ENCODE measurements at regions of chr1 and their contacts with region 1.

Region 1: GRCh38 chr1:207404849-207405525 is 49.1 kb upstream of the CR2 start:
- DNase-seq: no peak

Region 2: DNA sequence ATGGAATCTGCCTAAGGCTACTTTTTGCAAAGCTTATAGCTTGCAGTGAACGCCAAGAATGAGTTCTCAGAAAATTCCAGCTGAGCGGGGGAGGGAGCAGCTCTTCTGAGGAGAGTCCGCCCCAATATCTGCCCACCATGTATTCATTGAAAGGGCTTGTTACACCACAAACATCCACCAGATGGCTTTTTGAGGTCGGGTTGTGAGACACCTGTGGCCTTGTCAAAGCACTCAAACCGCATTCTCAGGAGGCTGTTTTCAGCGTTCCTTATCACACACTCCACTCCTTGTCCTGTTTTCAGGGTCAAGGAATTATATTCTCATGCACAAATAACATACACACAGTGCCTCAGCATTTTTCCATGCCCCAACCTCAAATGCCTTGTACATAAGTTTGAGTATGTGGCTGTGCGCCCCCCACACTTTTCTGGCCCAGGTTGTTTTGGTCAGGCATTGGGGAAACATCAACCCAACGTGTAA is 320.2 kb before region 1 on chr1:
- intact Hi-C with region 1: loop called (anchors 1 kb)
- DNase-seq: no peak

Region 3: DNA sequence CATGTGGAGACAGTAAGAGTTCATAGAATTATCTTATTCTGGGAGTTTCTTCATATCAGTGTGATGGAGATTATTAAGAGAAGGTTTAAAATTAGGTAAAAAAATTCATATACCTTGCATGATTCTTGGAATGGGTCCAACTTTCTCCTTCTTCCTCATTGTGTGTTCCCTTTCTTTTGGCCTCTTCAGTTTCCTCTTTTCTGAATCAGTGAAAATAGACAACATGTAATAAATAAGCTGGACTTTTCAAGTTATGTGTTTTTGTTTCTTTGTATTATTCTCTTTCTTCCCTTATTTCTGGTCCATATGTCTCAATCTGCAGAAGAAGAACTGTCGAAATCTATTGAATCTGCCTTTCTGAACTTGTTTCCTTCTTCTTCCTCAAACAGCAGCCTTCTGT is 270.4 kb before region 1 on chr1:
- intact Hi-C with region 1: no loop called
- DNase-seq: no peak

Region 4: DNA sequence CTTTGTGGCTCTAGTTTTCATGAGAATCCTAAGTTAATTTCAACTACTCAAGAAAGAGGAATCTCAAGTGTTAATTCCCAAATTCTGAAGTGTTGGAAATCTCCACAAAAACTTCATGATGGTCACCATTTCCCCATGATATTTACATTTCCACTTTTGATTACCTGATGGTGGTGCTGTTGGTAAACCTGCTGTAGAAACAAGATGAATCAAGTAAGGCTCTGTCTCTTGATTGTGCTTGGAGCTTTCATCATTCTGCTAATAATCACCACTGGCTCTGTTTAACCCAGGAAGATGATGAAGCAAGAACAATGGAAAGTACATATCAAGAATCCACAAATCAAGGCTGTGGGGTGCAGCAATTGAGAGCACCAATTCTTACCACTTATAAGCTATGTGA is 223.1 kb before region 1 on chr1:
- intact Hi-C with region 1: loop called (anchors 10 kb)
- DNase-seq: no peak

Region 5: DNA sequence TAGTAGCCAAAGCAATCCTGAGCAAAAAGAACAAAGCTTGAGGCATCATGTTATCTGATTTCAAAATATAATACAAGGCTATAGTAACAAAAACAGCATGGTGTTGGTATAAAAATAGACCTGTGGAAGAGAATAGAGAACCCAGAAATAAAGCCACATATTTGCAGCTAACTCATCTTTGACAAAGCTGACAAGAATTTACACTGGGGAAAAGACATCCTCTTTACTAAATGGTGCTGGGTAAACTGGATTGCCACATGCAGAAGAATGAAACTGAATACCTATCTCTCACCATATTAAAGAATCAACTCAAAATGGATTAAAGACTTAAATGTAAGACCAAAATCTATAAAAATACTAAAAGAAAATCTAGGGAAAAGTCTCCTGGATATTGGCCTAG is 143.0 kb before region 1 on chr1:
- intact Hi-C with region 1: loop called (anchors 5 kb)
- DNase-seq: no peak

Measured in cardiac septum (tissue), 1 donor.